ENCODE measurements at regions of chr6 and their contacts with region 1.

Region 1: DNA sequence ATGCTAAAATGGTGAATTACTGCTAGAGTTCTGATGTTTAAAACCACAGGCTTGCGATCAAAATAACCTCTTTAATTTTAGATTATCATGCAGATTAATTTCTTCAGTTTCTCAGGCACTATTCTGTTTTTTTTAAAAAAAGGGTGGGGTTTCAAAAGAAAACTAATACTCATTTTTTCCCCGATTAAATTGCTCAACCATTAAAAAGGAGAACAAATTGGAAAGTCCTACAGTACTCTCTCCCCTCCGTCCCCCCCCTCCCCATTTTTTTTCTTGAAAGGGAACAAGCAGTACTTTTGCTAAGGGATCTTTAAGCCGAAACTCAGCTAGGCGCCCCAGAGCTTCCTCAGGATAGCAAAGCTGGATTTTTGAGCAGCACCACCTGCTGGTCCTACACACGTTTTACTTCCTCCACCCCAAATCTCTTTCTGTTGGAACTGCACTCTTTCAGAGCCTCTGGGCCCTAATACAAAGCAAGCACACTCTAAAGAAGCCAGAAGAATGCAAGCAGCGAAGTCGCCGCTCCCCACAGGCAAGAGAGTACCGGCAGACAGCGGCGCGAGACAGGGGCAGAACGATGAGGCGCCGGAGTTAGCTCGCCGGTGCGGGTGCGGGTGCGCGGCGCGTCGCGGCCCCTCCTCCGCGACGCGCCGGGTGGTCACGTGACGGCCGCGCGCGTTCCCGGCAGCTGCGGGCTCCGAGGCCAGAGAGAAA is at the start of gene RNF146:
- DNase-seq: peak; percentile 90
- H3K4me3 ChIP-seq: peak within 1 kb of the TSS; percentile 92 to 99 (median 98)
- H3K27ac ChIP-seq: peak within 1 kb of the TSS; percentile 74
- H3K4me1 ChIP-seq: peaks cover 20% of the 10 kb centered on the region
- H3K27me3 ChIP-seq: no peaks in the 10 kb centered on the region
- CTCF ChIP-seq: peak; percentile 67 to 73
- POLR2A ChIP-seq: no peak
- total RNA-seq, gene RNF146: 43.8 and 48.1 TPM in 2 replicates

Region 2: GRCh38 chr6:126176282-126176681 is 1090.1 kb before region 1 on chr6:
- CTCF ChIA-PET with region 1: interaction called, 16 read pairs
- POLR2A ChIA-PET with region 1: no interaction called
- dilution Hi-C with region 1: no loop called
- intact Hi-C with region 1: no loop called
- DNase-seq: peak; percentile 51
- H3K4me3 ChIP-seq: no peak overlapping the region
- H3K27ac ChIP-seq: no peak overlapping the region
- H3K4me1 ChIP-seq: no peaks in the 10 kb centered on the region
- H3K27me3 ChIP-seq: no peaks in the 10 kb centered on the region
- CTCF ChIP-seq: peak; percentile 17 to 42
- POLR2A ChIP-seq: no peak

Region 3: DNA sequence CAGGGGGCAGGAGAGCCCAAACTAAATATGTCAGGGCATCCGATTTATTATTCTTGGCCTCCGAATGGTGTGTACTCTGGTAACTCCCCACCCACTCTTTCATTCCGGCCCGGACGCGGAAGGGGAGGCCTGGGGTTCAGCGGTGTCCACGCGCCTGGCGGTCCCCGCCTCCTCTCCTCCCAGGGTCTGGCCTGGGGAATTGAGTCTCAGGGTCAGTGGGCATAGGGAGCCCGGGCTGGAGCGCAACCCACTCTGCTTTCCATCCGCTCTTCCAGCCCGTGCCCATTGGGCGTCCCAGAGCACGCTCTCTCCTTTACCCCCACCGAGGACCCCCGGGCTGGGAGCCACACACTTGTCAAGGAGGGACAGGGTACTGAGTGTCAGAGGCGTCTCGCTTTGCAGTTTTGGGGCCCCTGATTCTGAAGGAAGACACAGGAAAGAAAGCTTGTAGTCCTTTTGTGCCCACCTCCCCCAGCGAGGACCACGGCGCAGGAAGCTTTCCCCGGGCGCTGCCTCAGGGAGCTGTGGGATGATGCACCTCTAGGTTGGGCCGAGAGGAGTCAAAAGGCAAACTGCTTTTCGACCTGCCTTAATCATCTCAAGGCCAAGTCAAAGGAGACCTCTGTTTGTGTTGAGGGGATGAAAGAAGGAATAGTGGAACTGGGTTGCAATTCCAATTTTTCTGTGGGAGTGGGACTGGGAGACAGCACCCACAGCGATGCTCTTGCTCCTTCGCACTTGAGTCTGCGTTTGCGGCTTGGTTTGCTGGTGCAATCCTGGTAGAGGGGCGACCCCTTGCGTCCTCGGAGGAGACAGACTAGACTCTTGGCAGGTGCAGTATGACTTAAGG is 145.3 kb before region 1 on chr6:
- CTCF ChIA-PET with region 1: interaction called, 24 read pairs
- POLR2A ChIA-PET with region 1: no interaction called
- dilution Hi-C with region 1: no loop called
- intact Hi-C with region 1: loop called (anchors 2 kb)
- DNase-seq: peak; percentile 88
- H3K4me3 ChIP-seq: peak overlapping the region; percentile 31 to 73 (median 59)
- H3K27ac ChIP-seq: no peak overlapping the region
- H3K4me1 ChIP-seq: peaks cover 19% of the 10 kb centered on the region
- H3K27me3 ChIP-seq: no peaks in the 10 kb centered on the region
- CTCF ChIP-seq: peak; percentile 83 to 89
- POLR2A ChIP-seq: no peak

Region 4: DNA sequence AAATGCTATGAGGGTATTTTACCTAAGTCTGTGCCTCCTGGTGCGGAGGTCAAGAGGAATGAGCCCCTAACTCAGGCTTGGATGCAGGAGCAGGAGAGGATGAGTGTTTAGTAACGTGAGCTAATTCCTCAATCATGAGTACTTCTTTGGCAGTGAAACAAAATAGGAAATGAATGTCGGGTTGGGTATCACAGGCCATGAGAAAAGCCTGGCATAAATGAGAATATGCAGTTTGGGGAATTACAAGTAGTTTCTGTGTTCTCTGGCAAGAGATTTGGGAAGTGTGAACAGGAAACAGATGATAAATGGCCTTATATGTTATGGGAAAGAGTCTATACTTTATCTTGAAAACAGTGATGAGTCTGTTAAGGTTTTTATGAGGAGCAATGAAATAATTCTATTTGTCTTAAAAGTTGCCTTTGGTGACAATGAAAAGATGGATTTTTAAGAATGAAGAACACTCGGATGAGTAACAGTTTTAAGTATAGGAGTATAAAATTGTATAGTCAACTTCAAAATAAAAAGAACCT is 58.7 kb before region 1 on chr6:
- CTCF ChIA-PET with region 1: interaction called, 33 read pairs
- POLR2A ChIA-PET with region 1: interaction called, 14 read pairs
- dilution Hi-C with region 1: no loop called
- intact Hi-C with region 1: loop called (anchors 1 kb)
- DNase-seq: peak; percentile 97
- H3K4me3 ChIP-seq: no peak overlapping the region
- H3K27ac ChIP-seq: peak overlapping the region; percentile 42
- H3K4me1 ChIP-seq: peaks cover 31% of the 10 kb centered on the region
- H3K27me3 ChIP-seq: no peaks in the 10 kb centered on the region
- CTCF ChIP-seq: no peak
- POLR2A ChIP-seq: no peak

Region 5: GRCh38 chr6:127291495-127291894 is 25.2 kb after region 1 on chr6:
- CTCF ChIA-PET with region 1: interaction called, 12 read pairs
- POLR2A ChIA-PET with region 1: interaction called, 3 read pairs
- dilution Hi-C with region 1: no loop called
- intact Hi-C with region 1: no loop called
- DNase-seq: no peak
- H3K4me3 ChIP-seq: no peak overlapping the region
- H3K27ac ChIP-seq: no peak overlapping the region
- H3K4me1 ChIP-seq: no peaks in the 10 kb centered on the region
- H3K27me3 ChIP-seq: no peaks in the 10 kb centered on the region
- CTCF ChIP-seq: no peak
- POLR2A ChIP-seq: no peak

Region 6: DNA sequence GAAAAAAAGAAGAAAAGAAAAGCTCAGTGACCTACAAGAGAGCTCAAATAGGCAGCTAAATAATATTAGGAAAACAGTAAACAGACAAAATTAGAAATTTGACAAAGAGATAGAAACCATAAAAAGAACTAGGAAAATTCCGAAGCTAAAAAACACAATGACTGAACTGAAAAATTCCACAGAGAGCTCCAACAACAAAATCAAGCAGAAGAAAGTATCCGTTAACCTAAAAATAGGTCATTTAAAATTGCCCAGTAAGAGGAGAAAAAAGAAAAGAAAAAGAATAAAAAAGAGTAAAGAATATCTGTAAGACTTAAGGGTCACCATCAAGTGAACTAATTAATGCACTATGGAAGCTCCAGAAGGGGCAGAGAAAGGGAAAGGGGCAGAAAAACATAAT is 83.6 kb after region 1 on chr6:
- CTCF ChIA-PET with region 1: no interaction called
- POLR2A ChIA-PET with region 1: no interaction called
- dilution Hi-C with region 1: no loop called
- intact Hi-C with region 1: no loop called
- DNase-seq: no peak
- H3K4me3 ChIP-seq: no peak overlapping the region
- H3K27ac ChIP-seq: no peak overlapping the region
- H3K4me1 ChIP-seq: no peaks in the 10 kb centered on the region
- H3K27me3 ChIP-seq: no peaks in the 10 kb centered on the region
- CTCF ChIP-seq: no peak
- POLR2A ChIP-seq: no peak

Region 7: GRCh38 chr6:127539272-127539671 is 272.9 kb after region 1 on chr6:
- CTCF ChIA-PET with region 1: interaction called, 13 read pairs
- POLR2A ChIA-PET with region 1: no interaction called
- dilution Hi-C with region 1: no loop called
- intact Hi-C with region 1: no loop called
- DNase-seq: peak; percentile 26
- H3K4me3 ChIP-seq: no peak overlapping the region
- H3K27ac ChIP-seq: no peak overlapping the region
- H3K4me1 ChIP-seq: no peaks in the 10 kb centered on the region
- H3K27me3 ChIP-seq: peaks cover 12 to 17% of the 10 kb centered on the region in 2 experiments
- CTCF ChIP-seq: peak in 1 of 2 donors; percentile 3
- POLR2A ChIP-seq: no peak

Region 8: DNA sequence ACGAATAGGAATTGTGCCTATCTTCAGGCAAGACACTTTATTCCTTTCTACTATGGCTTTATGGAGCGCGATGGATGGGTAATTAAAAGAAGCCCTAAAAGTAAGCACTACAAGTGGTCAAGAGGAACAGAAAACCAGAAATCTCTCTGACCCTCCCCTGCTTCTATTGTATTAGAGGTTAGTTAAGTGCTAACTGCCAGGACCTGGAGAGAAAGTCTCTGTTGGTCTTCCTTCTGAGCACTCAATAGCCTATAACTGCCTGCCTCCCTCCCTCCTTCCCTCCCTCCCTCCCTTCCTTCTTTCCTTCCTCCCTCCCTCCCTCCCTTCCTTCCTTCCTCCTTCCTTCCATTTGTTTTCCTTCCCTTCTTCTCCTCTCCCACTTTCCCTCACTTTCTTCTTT is 444.3 kb after region 1 on chr6:
- CTCF ChIA-PET with region 1: no interaction called
- POLR2A ChIA-PET with region 1: no interaction called
- dilution Hi-C with region 1: no loop called
- intact Hi-C with region 1: no loop called
- DNase-seq: no peak
- H3K4me3 ChIP-seq: no peak overlapping the region
- H3K27ac ChIP-seq: no peak overlapping the region
- H3K4me1 ChIP-seq: no peaks in the 10 kb centered on the region
- H3K27me3 ChIP-seq: peaks cover 6 to 34% of the 10 kb centered on the region in 2 experiments
- CTCF ChIP-seq: no peak
- POLR2A ChIP-seq: no peak